ENCODE measurements at regions of chr10 and their contacts with region 1.

Region 1: GRCh38 chr10:119933179-119933578 is 40.6 kb downstream of the SEC23IP start:
- ATAC-seq: peak; percentile 51 to 91 (median 65)
- H3K4me3 ChIP-seq: no peak overlapping the region
- H3K27ac ChIP-seq: no peak overlapping the region
- H3K4me1 ChIP-seq: peaks cover 0 to 2% of the 10 kb centered on the region in 2 donors

Region 2: DNA sequence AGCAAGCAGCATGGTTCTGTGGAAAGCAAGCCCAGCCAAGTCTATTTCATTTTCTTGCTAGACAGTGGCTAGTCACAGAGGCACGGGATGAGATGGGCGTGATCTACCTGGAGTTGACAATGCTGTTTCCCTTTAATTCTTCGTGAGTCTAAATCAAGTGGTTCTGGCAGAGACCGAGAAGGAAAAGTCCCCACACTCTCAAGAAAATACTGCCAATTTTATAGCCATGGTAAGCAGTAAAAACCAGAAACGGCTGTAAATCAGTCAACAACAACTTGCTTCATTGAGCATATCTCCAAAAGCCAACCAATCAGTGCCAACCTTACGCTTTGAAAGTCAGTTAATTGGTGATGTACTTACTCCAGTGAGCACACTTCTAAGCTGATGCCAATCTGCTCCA is 182.8 kb after region 1 on chr10:
- in situ Hi-C with region 1: loop called in 1 of 9 experiments (anchors 25 kb)
- ATAC-seq: no peak
- H3K4me3 ChIP-seq: no peak overlapping the region
- H3K27ac ChIP-seq: no peak overlapping the region
- H3K4me1 ChIP-seq: no peaks in the 10 kb centered on the region

Region 3: GRCh38 chr10:120336911-120337540 is 403.8 kb after region 1 on chr10:
- in situ Hi-C with region 1: loop called in 3 of 9 experiments (anchors 25 kb)
- ATAC-seq: peak in 3 of 8 experiments; percentile 63 to 72 (median 66)
- H3K4me3 ChIP-seq: no peak overlapping the region
- H3K27ac ChIP-seq: no peak overlapping the region
- H3K4me1 ChIP-seq: peaks cover 4 to 7% of the 10 kb centered on the region in 2 donors

Region 4: GRCh38 chr10:120850911-120851865 is 918.0 kb after region 1 on chr10 and contains the start of gene WDR11:
- in situ Hi-C with region 1: loop called in 1 of 9 experiments (anchors 25 kb)
- ATAC-seq: peak; percentile 96 to 99 (median 99)
- H3K4me3 ChIP-seq: peak within 1 kb of the TSS; percentile 71 to 97 (median 91)
- H3K27ac ChIP-seq: peak within 1 kb of the TSS; percentile 50 to 86
- H3K4me1 ChIP-seq: peaks cover 12 to 13% of the 10 kb centered on the region in 2 donors
- total RNA-seq, gene WDR11: 24.1 to 207 (median 48.7) TPM

Measured in motor neuron (in vitro differentiated cells).